Activated CD4-positive, alpha-beta T cell treated with anti-CD3 and anti-CD28 coated beads, Interleukin-2, amount 10 ng/mL, durations not matched to agents 7 days and 5 days (primary cell): ENCODE measurements at regions of chr14 and their contacts with region 1.

Region 1: DNA sequence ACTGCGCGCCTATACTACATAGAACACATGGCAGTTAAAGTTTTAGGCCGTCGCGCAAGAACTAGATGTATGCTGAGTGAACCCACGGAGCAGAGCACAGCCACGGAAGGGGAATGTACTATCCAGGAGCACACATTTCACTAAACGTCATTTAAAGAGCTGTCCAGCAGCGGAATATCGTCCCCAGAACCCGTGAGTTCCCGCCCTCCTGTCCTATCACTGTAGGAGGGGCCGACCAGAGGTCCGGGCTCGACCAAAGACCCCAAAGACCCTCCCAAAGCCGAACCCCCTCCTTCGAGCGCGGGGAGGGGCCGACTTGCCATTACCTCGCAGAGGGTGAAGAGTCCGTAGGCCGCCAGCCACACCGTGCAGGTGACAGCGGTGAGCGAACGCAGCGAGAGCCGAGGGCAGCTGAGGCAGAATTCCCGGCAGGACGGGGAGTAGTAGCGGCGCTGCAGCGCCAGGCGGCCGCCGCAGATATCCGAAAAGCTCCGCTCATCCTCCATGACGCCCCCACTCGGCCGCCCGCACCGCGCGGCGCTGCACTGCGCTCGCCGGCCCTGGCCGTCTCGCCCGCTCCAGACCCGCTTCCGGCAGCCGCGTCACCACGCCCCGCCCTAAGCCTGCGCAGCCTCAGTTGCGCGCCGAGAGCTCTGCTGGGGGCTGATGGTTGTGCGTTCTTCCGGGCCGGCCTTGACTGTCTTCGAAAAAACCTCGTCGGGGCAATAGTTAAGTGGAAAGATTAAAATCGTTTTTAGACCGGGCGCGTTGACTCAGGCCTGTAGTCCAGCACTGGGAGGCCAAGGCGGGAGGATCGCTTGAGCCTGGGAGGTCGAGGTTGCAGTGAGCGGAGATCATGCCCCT is at the start of gene PIGH:
- DNase-seq: peak; percentile 94
- H3K4me3 Mint-ChIP-seq: peak within 1 kb of the TSS; percentile 92
- H3K27ac Mint-ChIP-seq: peak within 1 kb of the TSS; percentile 91
- H3K4me1 Mint-ChIP-seq: peaks cover 40% of the 10 kb centered on the region
- H3K27me3 Mint-ChIP-seq: no peaks in the 10 kb centered on the region
- total RNA-seq, gene PIGH: 17.4 to 18.5 TPM

Region 2: GRCh38 chr14:67564236-67564635 is 35.7 kb before region 1 on chr14:
- CTCF ChIA-PET with region 1: no interaction called
- POLR2A ChIA-PET with region 1: no interaction called
- DNase-seq: no peak
- H3K4me3 Mint-ChIP-seq: no peak overlapping the region
- H3K27ac Mint-ChIP-seq: no peak overlapping the region
- H3K4me1 Mint-ChIP-seq: peaks cover 12% of the 10 kb centered on the region
- H3K27me3 Mint-ChIP-seq: no peaks in the 10 kb centered on the region

Region 3: DNA sequence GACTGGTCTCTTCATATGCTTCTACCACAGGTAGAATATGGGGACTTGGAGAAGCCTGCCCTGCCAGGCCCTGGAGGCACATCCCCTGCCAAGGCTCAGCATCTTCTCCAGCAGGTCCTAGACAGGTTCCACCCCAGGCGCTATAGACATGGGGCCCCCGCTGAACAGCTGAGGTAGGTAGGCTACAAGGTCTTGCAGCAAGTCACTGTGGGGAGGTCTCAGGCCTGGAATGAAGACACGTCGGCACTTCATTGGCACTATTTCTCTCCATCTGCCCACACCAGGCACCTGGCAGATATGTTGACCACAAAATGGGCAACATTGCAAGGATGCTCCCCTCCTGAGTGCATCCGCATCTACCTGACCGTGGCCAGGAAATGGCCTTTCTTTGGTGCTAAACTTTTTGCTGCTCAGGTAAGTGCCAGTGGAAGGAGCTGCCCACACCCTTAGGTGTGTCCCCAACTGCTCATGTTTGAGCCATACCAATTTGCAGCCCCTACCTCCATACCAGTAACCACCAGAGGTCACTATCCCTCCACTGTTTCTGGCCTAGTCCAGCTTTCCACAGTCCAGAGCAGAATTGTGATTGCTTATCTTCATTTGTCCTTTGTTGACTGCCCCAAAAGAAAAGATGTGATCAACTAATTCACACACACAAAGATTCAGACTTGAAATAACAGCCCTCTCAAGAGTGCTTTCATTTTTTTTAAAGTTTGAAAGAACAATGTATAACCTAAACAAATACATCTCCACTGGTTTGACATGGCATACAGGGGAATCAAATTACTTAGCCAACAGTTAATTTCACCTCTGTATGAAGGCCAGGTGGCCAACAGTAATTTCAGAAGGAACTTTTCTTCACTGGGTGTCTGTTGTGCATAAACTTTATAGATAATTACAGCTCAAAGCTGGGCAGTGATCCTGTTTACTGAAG is 16.0 kb before region 1 on chr14:
- CTCF ChIA-PET with region 1: interaction called, 10 read pairs
- POLR2A ChIA-PET with region 1: no interaction called
- DNase-seq: peak; percentile 40
- H3K4me3 Mint-ChIP-seq: no peak overlapping the region
- H3K27ac Mint-ChIP-seq: no peak overlapping the region
- H3K4me1 Mint-ChIP-seq: peaks cover 7% of the 10 kb centered on the region
- H3K27me3 Mint-ChIP-seq: no peaks in the 10 kb centered on the region

Region 4: GRCh38 chr14:67610491-67610890 is 10.6 kb after region 1 on chr14:
- CTCF ChIA-PET with region 1: interaction called, 10 read pairs
- POLR2A ChIA-PET with region 1: no interaction called
- DNase-seq: no peak
- H3K4me3 Mint-ChIP-seq: no peak overlapping the region
- H3K27ac Mint-ChIP-seq: no peak overlapping the region
- H3K4me1 Mint-ChIP-seq: no peaks in the 10 kb centered on the region
- H3K27me3 Mint-ChIP-seq: peaks cover 5% of the 10 kb centered on the region